Mammary epithelial cell (primary cell): ENCODE measurements at regions of chr9 and their contacts with region 1.

Region 1: GRCh38 chr9:79955300-79955699 is 383.5 kb downstream of the TLE4 start:
- DNase-seq: no peak
- H3K4me3 ChIP-seq: no peak overlapping the region
- H3K27ac ChIP-seq: no peak overlapping the region
- H3K4me1 ChIP-seq: no peaks in the 10 kb centered on the region
- H3K27me3 ChIP-seq: no peaks in the 10 kb centered on the region
- CTCF ChIP-seq: peak in 1 of 2 donors; percentile 41

Region 2: GRCh38 chr9:79471580-79472543 is 483.4 kb before region 1 on chr9:
- CTCF ChIA-PET with region 1: no interaction called
- dilution Hi-C with region 1: no loop called
- in situ Hi-C with region 1: no loop called
- intact Hi-C with region 1: loop called (anchors 1 kb)
- DNase-seq: peak; percentile 28
- H3K4me3 ChIP-seq: no peak overlapping the region
- H3K27ac ChIP-seq: no peak overlapping the region
- H3K4me1 ChIP-seq: no peaks in the 10 kb centered on the region
- H3K27me3 ChIP-seq: peaks cover 2% of the 10 kb centered on the region
- CTCF ChIP-seq: peak; percentile 26 to 55

Region 3: GRCh38 chr9:79764381-79764780 is 190.9 kb before region 1 on chr9:
- CTCF ChIA-PET with region 1: no interaction called
- dilution Hi-C with region 1: no loop called
- in situ Hi-C with region 1: no loop called
- intact Hi-C with region 1: loop called (anchors 10 kb)
- DNase-seq: peak; percentile 85
- H3K4me3 ChIP-seq: no peak overlapping the region
- H3K27ac ChIP-seq: no peak overlapping the region
- H3K4me1 ChIP-seq: peaks cover 16% of the 10 kb centered on the region
- H3K27me3 ChIP-seq: no peaks in the 10 kb centered on the region
- CTCF ChIP-seq: no peak

Region 4: DNA sequence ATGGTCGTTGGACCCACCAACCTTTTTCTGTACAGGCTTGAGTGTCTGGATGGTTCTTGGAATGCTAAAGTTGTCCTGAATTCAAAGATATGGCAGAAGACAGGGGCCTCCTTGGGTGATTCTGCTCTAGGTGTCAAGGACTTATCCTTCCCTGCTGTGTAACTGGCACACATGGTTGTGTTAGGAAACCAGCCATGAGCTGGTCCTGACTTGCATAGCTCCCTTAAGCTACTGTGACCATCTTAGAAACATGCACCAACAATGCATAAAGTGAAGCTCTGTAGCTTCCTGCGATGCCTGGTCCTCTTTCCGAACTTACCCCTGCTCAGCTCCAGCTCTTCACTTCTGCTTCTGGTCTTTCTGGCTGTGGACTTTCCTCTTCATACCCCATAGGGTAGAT is 158.9 kb before region 1 on chr9:
- CTCF ChIA-PET with region 1: no interaction called
- dilution Hi-C with region 1: no loop called
- in situ Hi-C with region 1: no loop called
- intact Hi-C with region 1: no loop called
- DNase-seq: peak; percentile 15
- H3K4me3 ChIP-seq: no peak overlapping the region
- H3K27ac ChIP-seq: no peak overlapping the region
- H3K4me1 ChIP-seq: no peaks in the 10 kb centered on the region
- H3K27me3 ChIP-seq: no peaks in the 10 kb centered on the region
- CTCF ChIP-seq: no peak

Region 5: GRCh38 chr9:79868567-79869189 is 86.6 kb before region 1 on chr9:
- CTCF ChIA-PET with region 1: no interaction called
- dilution Hi-C with region 1: no loop called
- in situ Hi-C with region 1: no loop called
- intact Hi-C with region 1: no loop called
- DNase-seq: no peak
- H3K4me3 ChIP-seq: no peak overlapping the region
- H3K27ac ChIP-seq: no peak overlapping the region
- H3K4me1 ChIP-seq: no peaks in the 10 kb centered on the region
- H3K27me3 ChIP-seq: no peaks in the 10 kb centered on the region
- CTCF ChIP-seq: no peak

Region 6: DNA sequence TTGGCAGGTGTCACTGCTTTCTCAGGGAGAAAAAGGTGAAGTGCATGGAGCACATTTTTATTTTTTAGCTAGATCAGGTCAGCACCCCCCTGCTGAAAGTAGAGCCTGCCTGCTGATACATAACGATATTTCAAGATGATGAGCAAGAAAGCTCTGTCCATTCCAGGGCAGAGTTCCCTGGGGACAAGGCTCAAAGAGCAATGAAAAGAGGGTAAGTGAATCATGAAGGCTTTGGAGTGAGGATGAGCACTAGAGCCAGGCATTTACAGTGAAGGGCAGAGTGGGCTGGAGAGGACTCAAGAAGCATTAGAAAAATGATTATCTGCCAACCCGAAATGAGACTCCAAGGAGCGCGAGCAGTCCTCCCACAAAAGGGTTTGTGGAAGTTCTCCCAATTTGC is 37.9 kb before region 1 on chr9:
- CTCF ChIA-PET with region 1: no interaction called
- dilution Hi-C with region 1: no loop called
- in situ Hi-C with region 1: no loop called
- intact Hi-C with region 1: no loop called
- DNase-seq: no peak
- H3K4me3 ChIP-seq: no peak overlapping the region
- H3K27ac ChIP-seq: no peak overlapping the region
- H3K4me1 ChIP-seq: no peaks in the 10 kb centered on the region
- H3K27me3 ChIP-seq: no peaks in the 10 kb centered on the region
- CTCF ChIP-seq: no peak

Region 7: GRCh38 chr9:79974806-79975422 is 19.6 kb after region 1 on chr9:
- CTCF ChIA-PET with region 1: no interaction called
- dilution Hi-C with region 1: no loop called
- in situ Hi-C with region 1: no loop called
- intact Hi-C with region 1: no loop called
- DNase-seq: no peak
- H3K4me3 ChIP-seq: no peak overlapping the region
- H3K27ac ChIP-seq: no peak overlapping the region
- H3K4me1 ChIP-seq: no peaks in the 10 kb centered on the region
- H3K27me3 ChIP-seq: no peaks in the 10 kb centered on the region
- CTCF ChIP-seq: no peak